RWPE1 (cell line): ENCODE measurements at regions of chr3 and their contacts with region 1.

Region 1: DNA sequence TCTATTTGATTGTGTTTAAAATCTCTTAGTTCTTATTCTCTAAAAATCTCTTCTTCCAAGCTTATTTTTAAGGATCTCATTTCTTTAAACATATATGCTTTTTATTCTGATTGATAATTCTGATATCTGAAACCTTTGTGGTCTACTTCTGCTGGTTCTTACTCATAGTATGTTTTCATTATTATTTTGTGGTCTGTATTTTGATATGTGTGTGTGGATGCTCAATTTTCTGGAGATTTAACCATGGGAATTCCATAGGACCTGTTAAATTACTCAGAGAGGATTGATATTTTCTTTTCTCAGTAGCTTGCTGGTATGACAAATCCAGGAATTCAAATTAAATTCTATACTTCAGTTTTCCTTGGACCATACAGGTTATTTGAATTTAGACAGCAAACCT is 14.7 kb upstream of the HHLA2 start:
- DNase-seq: no peak
- H3K27ac ChIP-seq: no peak overlapping the region
- CTCF ChIP-seq: no peak

Region 2: DNA sequence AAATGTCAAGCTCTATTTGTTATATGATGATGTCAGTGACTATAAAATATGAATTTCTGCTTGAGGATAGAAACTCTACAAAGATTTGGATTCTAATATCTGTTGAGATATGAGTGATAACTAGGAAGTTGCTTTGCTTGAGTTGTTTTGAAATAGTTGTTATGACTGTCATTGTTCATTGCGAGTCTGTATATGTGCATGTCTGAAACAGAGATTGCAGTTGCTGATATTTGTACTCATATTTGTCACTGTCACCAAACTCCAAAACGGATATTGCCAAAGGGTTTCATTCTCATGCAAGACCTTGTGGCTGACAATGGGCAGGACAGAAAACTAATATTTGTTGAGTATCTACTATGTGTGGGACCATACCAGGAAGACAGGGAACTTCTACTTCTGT is 431.0 kb before region 1 on chr3:
- CTCF ChIA-PET with region 1: interaction called, 10 read pairs
- POLR2A ChIA-PET with region 1: no interaction called
- DNase-seq: no peak
- H3K27ac ChIP-seq: no peak overlapping the region
- CTCF ChIP-seq: no peak